ENCODE measurements at regions of chr14 and their contacts with region 1.

Region 1: GRCh38 chr14:92951912-92952471 is 29.0 kb downstream of the CHGA start:
- DNase-seq: peak; percentile 79
- ATAC-seq: peak; percentile 98
- H3K4me3 Mint-ChIP-seq: no peak overlapping the region
- H3K27ac Mint-ChIP-seq: no peak overlapping the region
- H3K4me1 Mint-ChIP-seq: peaks cover 4% of the 10 kb centered on the region
- H3K27me3 Mint-ChIP-seq: no peaks in the 10 kb centered on the region
- CTCF ChIP-seq: peak; percentile 95

Region 2: DNA sequence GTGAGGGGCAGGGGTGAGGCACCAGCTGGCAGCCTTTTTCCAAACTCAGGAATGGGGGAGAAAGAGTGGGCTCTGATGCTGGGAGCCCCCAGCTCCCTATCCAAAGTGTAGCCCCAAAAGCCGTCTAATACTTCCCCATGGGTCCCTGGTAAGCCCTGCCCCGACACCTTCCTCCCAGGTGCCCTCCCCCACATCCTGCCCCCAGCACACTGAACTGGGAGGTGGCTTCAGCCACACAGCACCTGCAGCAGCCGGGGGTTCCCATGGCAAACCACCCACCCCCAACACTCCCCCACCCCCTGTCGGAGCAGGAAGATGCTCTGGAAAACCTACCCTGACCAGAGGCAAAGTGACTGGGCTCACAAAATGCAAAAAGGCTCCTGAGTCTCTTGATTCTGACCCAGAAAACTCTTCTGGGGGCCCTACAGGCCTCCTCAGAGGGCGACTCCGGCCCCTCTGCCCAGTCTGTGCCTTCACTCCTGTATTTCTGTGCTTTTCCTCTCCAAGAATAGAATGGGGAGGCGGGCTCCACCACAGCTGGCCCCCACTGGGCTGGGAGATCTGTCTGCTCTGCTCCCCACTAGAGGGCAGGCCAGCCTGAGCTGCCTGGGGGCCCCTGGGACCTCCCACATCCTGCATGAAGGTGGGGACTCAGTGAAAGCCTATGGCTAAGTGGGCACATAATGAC is 82.1 kb after region 1 on chr14:
- CTCF ChIA-PET with region 1: interaction called, 3 read pairs
- POLR2A ChIA-PET with region 1: no interaction called
- intact Hi-C with region 1: loop called (anchors 5 kb)
- DNase-seq: peak; percentile 31
- ATAC-seq: peak; percentile 82
- H3K4me3 Mint-ChIP-seq: peak overlapping the region; percentile 59
- H3K27ac Mint-ChIP-seq: peak overlapping the region; percentile 82
- H3K4me1 Mint-ChIP-seq: peaks cover 58% of the 10 kb centered on the region
- H3K27me3 Mint-ChIP-seq: no peaks in the 10 kb centered on the region
- CTCF ChIP-seq: no peak

Region 3: GRCh38 chr14:93137864-93138263 is 185.9 kb after region 1 on chr14:
- CTCF ChIA-PET with region 1: interaction called, 22 read pairs
- POLR2A ChIA-PET with region 1: no interaction called
- intact Hi-C with region 1: loop called (anchors 1 kb)
- DNase-seq: no peak
- ATAC-seq: no peak
- H3K4me3 Mint-ChIP-seq: no peak overlapping the region
- H3K27ac Mint-ChIP-seq: no peak overlapping the region
- H3K4me1 Mint-ChIP-seq: peaks cover 3% of the 10 kb centered on the region
- H3K27me3 Mint-ChIP-seq: no peaks in the 10 kb centered on the region
- CTCF ChIP-seq: no peak

Region 4: DNA sequence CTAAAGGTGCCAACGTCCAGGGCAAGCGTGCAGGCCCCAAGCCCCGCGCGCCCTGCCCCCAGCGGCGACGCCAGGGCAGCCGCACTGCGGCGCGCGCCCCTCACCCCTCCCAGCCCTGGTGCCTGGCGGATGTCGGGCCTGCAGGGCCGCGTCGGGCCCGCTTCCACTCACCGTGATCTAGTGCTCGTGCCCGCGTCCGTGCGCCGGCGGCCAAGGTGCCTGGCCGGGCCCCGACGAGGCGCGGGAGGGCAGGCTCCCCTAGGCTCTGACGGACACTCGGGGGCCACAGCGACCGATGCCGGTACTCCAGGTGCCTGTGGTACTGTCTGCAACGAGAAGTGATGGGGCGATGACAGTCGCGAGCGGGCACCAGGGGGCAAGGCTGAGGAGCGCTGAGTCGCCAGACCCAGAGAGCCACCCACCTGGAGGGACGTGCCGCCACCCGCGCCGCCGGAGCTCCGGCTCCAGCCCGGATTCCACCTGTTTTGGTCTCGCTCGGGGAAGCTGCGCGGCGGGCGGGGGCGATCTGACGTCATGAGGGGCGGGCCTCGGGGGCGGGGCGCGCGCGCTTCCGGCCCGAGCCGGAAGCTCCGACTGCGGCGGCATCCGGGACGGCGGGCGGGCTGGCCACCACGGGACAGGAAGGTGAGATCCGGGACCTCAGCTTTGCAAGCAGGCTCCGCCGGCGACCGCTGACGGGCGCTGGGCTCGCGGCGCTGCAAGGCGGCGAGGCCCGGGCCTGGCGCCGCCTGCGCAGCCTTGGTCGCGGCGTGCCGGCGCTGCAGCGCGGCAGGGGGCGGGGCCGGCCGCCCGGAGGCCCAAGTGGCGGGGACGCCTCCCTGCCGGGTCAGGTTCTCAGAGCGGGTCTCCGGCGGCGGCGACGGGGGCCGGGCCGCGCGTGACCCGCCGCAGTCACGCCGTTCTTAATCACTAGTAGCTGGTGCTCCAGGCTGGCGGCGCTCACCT is 232.7 kb after region 1 on chr14 and contains the starts of genes LYSET and MOAP1:
- CTCF ChIA-PET with region 1: interaction called, 16 read pairs
- POLR2A ChIA-PET with region 1: no interaction called
- intact Hi-C with region 1: no loop called
- DNase-seq: peak; percentile 81
- ATAC-seq: peak; percentile 83
- H3K4me3 Mint-ChIP-seq: peak within 1 kb of the TSS; percentile 92
- H3K27ac Mint-ChIP-seq: peak within 1 kb of the TSS; percentile 93
- H3K4me1 Mint-ChIP-seq: peaks cover 24% of the 10 kb centered on the region
- H3K27me3 Mint-ChIP-seq: no peaks in the 10 kb centered on the region
- CTCF ChIP-seq: no peak
- total RNA-seq, gene LYSET: 17.6 and 19.3 TPM in 2 replicates
- total RNA-seq, gene MOAP1: 21.3 and 24.4 TPM in 2 replicates

Region 5: DNA sequence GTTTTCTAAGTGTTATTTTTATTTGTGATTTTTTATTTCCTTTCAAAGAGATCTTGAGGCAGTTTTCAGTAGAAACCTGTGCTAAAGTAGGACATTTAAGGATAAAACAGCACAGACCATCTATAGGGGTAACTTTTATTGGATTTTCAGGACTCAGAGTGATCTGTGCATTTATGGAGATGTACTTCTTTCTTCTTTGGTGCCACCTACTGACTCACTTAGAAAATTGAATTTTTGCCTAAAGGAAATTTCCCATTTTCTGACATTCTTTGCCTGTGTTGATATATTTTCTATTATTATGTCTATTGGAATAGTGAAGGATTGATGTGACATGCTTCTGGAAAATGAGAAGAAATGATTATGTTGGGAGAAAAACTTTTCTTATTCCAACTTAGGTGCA is 591.8 kb after region 1 on chr14:
- CTCF ChIA-PET with region 1: no interaction called
- POLR2A ChIA-PET with region 1: no interaction called
- intact Hi-C with region 1: loop called (anchors 10 kb)
- DNase-seq: no peak
- ATAC-seq: no peak
- H3K4me3 Mint-ChIP-seq: no peak overlapping the region
- H3K27ac Mint-ChIP-seq: no peak overlapping the region
- H3K4me1 Mint-ChIP-seq: peaks cover 9% of the 10 kb centered on the region
- H3K27me3 Mint-ChIP-seq: peaks cover 6% of the 10 kb centered on the region
- CTCF ChIP-seq: no peak

Region 6: DNA sequence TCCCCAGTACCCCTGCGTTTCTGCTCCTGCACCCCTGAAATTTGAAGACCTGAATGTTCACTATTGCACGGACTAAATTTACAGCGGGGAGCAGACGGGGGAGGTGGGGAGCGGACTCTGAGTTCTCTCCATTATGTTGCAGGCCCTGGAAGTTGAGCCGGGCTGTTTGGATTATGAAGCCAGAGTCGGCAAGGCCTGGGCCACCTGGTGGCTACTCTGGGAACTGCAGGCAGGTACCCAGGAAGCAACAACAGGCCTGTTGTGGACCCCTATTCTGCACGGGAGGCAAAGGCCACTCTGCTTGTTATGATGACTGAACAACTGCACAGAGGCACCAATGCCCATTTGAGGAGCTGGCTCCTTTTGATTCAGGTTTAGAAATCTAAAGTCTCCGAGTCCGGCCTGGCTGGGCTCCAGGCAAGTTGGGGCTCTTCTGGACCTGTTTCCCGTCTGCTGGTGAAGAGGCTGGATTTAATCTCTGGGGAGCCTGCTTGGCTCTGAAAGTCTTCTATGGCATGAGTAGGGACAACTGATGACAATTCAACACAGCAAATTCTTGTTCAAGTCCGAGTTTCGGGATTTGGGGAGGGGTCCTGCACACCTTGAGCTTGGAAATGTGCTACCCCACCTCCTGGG is 941.0 kb after region 1 on chr14:
- CTCF ChIA-PET with region 1: no interaction called
- POLR2A ChIA-PET with region 1: no interaction called
- intact Hi-C with region 1: loop called (anchors 2 kb)
- DNase-seq: peak; percentile 71
- ATAC-seq: peak; percentile 65
- H3K4me3 Mint-ChIP-seq: no peak overlapping the region
- H3K27ac Mint-ChIP-seq: no peak overlapping the region
- H3K4me1 Mint-ChIP-seq: no peaks in the 10 kb centered on the region
- H3K27me3 Mint-ChIP-seq: peaks cover 32% of the 10 kb centered on the region
- CTCF ChIP-seq: peak; percentile 56